Ovary (tissue), 10 donors: ENCODE measurements at regions of chr1 and their contacts with region 1.

Region 1: DNA sequence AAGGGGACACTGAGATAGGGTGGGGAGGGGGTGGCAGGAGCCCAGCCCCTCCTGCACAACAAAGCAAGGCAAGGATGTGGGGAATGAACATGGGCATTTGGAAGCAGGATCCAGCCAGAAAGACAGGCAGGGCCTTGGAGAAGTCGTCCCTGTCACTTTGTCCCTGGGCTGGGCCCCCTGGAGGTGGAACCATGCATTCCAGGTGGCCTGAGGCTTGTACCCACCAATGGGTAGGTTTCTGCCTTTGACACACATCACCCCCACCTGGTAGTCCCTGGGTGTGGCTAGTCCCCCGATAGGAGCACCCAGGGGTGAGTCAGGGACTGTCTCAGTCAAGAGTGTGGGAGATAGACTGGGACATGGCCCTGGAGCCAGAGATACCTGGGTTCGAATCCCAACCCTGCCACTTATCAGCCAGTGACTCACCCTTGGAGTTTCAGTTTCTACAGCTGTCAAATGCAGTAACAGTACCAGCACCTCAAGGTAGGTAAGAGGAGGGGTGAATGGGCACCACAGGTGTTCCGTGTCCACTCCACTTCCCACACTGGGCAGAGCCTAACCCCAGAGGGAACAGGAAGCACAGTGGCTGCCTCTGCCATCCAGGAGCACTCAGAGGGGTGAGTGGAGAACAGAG is 10.0 kb downstream of the PLA2G2D start:
- DNase-seq: peak in 1 of 5 donors; percentile 32
- H3K4me3 ChIP-seq: no peak overlapping the region
- H3K27ac ChIP-seq: peak overlapping the region; percentile 34 to 80
- H3K4me1 ChIP-seq: peaks cover 14% of the 10 kb centered on the region
- H3K27me3 ChIP-seq: no peaks in the 10 kb centered on the region
- CTCF ChIP-seq: peak in 1 of 3 donors; percentile 14
- EP300 ChIP-seq: no peak
- POLR2A ChIP-seq: no peak

Region 2: GRCh38 chr1:20028125-20028524 is 81.2 kb before region 1 on chr1:
- intact Hi-C with region 1: no loop called
- DNase-seq: peak in 4 of 5 donors; percentile 34 to 72 (median 58)
- H3K4me3 ChIP-seq: peak overlapping the region; percentile 40
- H3K27ac ChIP-seq: peak overlapping the region; percentile 18 to 72
- H3K4me1 ChIP-seq: peaks cover 8% of the 10 kb centered on the region
- H3K27me3 ChIP-seq: no peaks in the 10 kb centered on the region
- CTCF ChIP-seq: no peak
- EP300 ChIP-seq: peak; percentile 71
- POLR2A ChIP-seq: peak; percentile 29

Region 3: GRCh38 chr1:20142001-20142710 is 32.8 kb after region 1 on chr1:
- intact Hi-C with region 1: loop called in 2 of 4 experiments (anchors 5 kb)
- DNase-seq: no peak
- H3K4me3 ChIP-seq: no peak overlapping the region
- H3K27ac ChIP-seq: no peak overlapping the region
- H3K4me1 ChIP-seq: peaks cover 7% of the 10 kb centered on the region
- H3K27me3 ChIP-seq: no peaks in the 10 kb centered on the region
- CTCF ChIP-seq: no peak
- EP300 ChIP-seq: no peak
- POLR2A ChIP-seq: no peak